OCI-LY7 (cell line): ENCODE measurements at regions of chr15 and their contacts with region 1.

Region 1: DNA sequence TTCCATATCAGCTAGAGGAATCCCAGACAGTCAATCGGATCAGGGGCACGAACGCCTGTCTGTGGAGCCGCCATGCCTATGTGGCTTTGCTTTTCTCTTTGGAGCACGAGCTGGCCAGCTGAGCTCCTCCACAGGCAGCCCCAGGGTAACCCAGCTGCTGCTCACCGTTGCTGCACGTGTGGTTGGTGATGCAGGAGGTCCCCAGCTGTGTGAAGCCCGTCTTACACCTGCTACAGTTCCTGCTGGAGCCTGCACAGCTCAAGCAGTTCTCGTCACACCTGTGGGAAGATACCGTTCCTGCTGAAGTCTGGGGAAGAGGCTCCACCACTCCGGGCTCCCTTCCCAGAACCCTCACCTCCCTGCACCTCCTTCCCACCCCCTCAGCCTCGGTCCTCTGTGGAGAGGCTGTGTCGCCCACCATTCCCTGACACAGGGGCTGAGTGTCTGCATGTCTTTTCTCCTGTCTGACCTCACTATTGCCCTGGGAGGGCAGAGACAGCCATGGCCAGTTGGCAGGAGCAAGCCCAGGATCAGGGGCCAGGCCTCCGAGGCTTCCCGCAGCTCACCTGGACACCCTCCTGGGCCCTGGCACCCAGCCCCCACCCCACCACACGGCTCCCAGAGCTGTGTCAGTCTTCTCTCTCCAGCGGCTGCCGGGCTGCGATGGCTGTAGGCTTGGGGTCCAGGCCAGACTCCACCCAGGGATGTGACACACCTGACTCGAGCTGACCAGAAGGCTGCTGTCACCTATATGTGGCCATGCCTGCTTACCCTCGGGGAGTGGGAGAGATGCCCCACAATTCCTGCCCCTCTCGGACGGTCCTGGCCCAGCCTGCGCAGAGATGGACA is 12.2 kb upstream of the SNRPA1 start:
- DNase-seq: peak; percentile 64
- H3K4me3 ChIP-seq: no peak overlapping the region
- H3K27ac ChIP-seq: no peak overlapping the region
- H3K4me1 ChIP-seq: peaks cover 7% of the 10 kb centered on the region
- CTCF ChIP-seq: no peak

Region 2: DNA sequence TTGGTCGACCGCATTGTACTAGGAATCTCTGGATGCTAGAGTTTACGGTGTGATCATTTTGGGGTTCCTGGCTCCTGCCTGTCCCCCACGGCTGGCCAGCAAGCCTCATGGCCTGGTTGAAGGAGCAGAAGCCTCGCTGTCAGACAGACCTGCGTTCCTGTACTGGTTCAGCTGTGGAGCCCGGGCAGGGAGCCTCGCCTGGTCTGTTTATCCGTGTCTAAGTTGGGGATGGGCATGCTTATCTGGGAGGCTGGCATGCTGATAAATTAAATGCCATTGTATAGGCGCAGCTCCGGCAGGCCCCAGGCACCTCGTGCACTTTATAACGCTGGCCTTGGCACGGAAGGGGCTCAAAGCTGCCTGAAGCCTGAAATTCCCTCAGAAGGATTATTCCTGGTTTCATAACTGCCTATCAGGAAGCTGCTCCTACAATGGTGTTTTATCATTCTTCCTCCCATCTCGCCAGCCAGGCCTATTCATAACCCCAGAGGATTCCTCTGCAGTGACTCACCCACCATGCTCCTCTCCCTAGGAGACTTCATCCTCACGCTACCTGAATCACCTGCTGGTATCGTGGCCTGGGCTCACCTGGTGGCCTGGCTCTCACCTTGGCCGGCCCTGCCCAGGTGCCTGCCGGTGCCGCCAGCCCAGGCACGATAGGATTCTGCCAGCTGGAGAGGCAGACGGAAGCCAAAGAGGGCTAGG is 594.0 kb before region 1 on chr15:
- CTCF ChIA-PET with region 1: no interaction called
- POLR2A ChIA-PET with region 1: no interaction called
- intact Hi-C with region 1: no loop called
- DNase-seq: no peak
- H3K4me3 ChIP-seq: no peak overlapping the region
- H3K27ac ChIP-seq: no peak overlapping the region
- H3K4me1 ChIP-seq: no peaks in the 10 kb centered on the region
- CTCF ChIP-seq: no peak

Region 3: GRCh38 chr15:101439285-101439919 is 132.1 kb after region 1 on chr15:
- CTCF ChIA-PET with region 1: no interaction called
- POLR2A ChIA-PET with region 1: no interaction called
- intact Hi-C with region 1: no loop called
- DNase-seq: no peak
- H3K4me3 ChIP-seq: no peak overlapping the region
- H3K27ac ChIP-seq: no peak overlapping the region
- H3K4me1 ChIP-seq: no peaks in the 10 kb centered on the region
- CTCF ChIP-seq: no peak

Region 4: GRCh38 chr15:101501703-101502373 is 194.6 kb after region 1 on chr15:
- CTCF ChIA-PET with region 1: no interaction called
- POLR2A ChIA-PET with region 1: no interaction called
- intact Hi-C with region 1: loop called (anchors 10 kb)
- DNase-seq: peak; percentile 18
- H3K4me3 ChIP-seq: no peak overlapping the region
- H3K27ac ChIP-seq: no peak overlapping the region
- H3K4me1 ChIP-seq: no peaks in the 10 kb centered on the region
- CTCF ChIP-seq: peak; percentile 67